A549 (cell line): ENCODE measurements at regions of chr1 and their contacts with region 1.

Region 1: GRCh38 chr1:151059078-151059907 is at the start of gene CDC42SE1:
- DNase-seq: peak; percentile 88 to 94
- ATAC-seq: peak; percentile 90 to 93
- H3K4me3 ChIP-seq: peak within 1 kb of the TSS; percentile 90
- H3K27ac ChIP-seq: peak within 1 kb of the TSS; percentile 98 to 100
- H3K4me1 ChIP-seq: peaks cover 49% of the 10 kb centered on the region
- CTCF ChIP-seq: peak; percentile 42; the same call in 2 of the 3 replicates
- EP300 ChIP-seq: no peak
- POLR2A ChIP-seq: peak; percentile 68
- RAD21 ChIP-seq: peak in 1 of 2 experiments; percentile 27; a peak in 3 of 5 replicates
- polyA plus RNA-seq, gene CDC42SE1: 78.1 and 83.1 TPM in 2 replicates

Region 2: GRCh38 chr1:151047925-151048645 is 11.2 kb before region 1 on chr1:
- CTCF ChIA-PET with region 1: interaction called, 9 read pairs
- POLR2A ChIA-PET with region 1: interaction called, 34 read pairs
- DNase-seq: peak; percentile 83 to 96
- ATAC-seq: peak; percentile 87 to 91
- H3K4me3 ChIP-seq: peak overlapping the region; percentile 80
- H3K27ac ChIP-seq: peak overlapping the region; percentile 94 to 96
- H3K4me1 ChIP-seq: peaks cover 16% of the 10 kb centered on the region
- CTCF ChIP-seq: peak; percentile 67; the same call in 2 of the 3 replicates
- EP300 ChIP-seq: no peak
- POLR2A ChIP-seq: peak; percentile 53; the same call in 1 of the 2 replicates
- RAD21 ChIP-seq: peak in 1 of 2 experiments; percentile 17; a peak in 1 of 5 replicates